PC-9 (cell line): ENCODE measurements at regions of chr3 and their contacts with region 1.

Region 1: DNA sequence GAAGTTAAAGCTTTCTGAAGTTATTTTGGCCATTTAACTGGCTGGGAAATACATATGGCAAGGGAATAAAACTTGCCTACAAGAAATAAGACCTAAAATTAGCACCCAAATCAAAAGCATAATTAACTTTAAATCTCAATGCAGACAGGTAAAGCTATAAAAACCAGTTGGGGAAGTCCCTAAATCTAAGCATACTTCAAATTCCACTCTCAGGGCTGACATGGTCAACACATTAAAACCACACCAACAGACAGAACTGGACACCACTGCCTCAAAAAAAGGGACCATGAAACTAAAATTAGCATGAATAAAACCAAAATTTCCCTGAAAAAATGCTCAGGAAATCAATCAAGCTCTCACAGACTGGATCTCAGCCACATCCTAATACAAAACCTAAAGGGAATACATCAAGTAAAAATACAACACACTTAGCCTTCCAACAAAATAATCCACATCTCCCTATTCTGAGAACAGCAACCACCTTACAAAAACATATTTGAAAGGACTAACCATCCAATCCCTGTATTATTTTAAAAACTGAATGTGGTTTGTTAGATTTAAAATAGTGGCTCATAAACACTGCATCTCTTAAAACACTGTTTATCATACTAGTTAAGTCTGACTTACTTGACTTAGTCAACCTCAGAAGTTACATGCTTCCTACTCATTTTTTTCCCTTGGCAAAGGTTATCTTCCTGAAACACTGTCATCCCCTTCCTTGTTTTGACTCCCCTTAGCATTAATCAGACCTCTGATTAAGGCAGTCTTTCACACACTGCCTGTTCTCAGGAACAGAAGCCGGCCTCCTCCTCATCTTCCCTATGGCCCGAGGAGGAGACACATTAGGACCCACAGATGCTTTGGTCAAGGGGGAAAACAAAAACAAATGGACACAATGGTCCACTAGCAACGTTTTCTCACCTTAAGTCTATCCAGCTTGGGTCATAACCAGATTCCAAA is 8.3 kb downstream of the TRA2B start:
- DNase-seq: peak in 1 of 2 experiments; percentile 74
- H3K4me3 ChIP-seq: peak overlapping the region; percentile 2; the same call in 1 of the 2 replicates
- H3K27ac ChIP-seq: peak overlapping the region; percentile 30
- H3K4me1 ChIP-seq: peaks cover 74% of the 10 kb centered on the region
- H3K27me3 ChIP-seq: no peaks in the 10 kb centered on the region
- CTCF ChIP-seq: no peak

Region 2: DNA sequence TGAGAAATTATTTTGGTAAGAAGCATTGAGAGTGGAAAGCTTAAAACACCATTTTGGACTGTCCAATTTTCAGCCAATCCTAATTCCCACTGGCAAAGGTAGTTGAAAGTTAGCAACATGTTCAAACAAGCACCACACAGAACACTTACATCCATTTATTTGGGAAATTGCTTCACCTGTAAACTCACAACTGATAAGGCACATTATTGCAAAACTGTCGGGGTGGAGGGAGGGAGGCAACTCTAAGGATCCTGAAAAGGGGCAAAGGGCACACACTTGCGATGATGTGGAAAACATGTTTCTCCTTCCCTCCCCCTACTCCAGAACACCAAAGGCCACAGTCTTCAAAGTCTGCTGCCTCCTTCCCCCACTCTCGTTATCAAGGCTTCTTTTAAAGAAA is 440.0 kb before region 1 on chr3:
- CTCF ChIA-PET with region 1: no interaction called
- POLR2A ChIA-PET with region 1: interaction called, 21 read pairs
- intact Hi-C with region 1: no loop called
- DNase-seq: no peak
- H3K4me3 ChIP-seq: no peak overlapping the region
- H3K27ac ChIP-seq: no peak overlapping the region
- H3K4me1 ChIP-seq: no peaks in the 10 kb centered on the region
- H3K27me3 ChIP-seq: no peaks in the 10 kb centered on the region
- CTCF ChIP-seq: no peak

Region 3: GRCh38 chr3:185779461-185779860 is 150.0 kb before region 1 on chr3:
- CTCF ChIA-PET with region 1: interaction called, 16 read pairs
- POLR2A ChIA-PET with region 1: no interaction called
- intact Hi-C with region 1: no loop called
- DNase-seq: no peak
- H3K4me3 ChIP-seq: no peak overlapping the region
- H3K27ac ChIP-seq: no peak overlapping the region
- H3K4me1 ChIP-seq: peaks cover 21% of the 10 kb centered on the region
- H3K27me3 ChIP-seq: no peaks in the 10 kb centered on the region
- CTCF ChIP-seq: no peak

Region 4: DNA sequence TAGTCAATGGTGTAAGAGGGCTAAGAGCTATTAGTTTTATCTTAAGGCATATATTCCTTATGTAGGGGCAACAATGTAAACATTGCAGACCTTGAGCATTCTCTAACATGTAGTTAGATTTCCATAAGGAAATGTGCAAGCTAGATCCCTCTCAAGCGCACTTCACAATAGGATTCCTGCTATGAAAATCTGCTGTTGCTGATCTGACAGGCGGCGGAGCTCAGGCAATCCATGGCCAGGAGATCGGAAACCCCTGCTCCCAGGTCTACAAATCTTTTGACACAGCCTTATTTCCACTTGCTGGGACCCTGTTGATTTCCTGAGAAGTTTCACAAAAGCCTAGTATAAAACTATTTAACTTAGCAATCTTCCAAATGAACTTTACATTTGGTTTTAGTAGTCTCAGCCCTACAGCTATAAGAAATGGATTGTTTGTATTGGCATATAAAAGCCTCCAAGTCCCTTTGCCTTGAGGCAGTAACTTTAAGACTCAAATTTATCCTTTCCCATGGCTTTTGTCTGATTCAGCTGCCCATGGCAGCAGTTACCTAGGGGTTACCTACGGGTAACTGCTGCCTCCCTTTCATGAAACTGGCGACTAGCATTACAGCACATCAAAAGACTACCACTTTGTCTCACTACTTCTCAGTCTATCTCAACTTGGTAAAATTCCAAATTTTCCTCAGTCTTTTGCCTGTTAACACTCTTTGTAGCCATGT is 14.4 kb before region 1 on chr3:
- CTCF ChIA-PET with region 1: no interaction called
- POLR2A ChIA-PET with region 1: no interaction called
- intact Hi-C with region 1: no loop called
- DNase-seq: no peak
- H3K4me3 ChIP-seq: no peak overlapping the region
- H3K27ac ChIP-seq: no peak overlapping the region
- H3K4me1 ChIP-seq: no peaks in the 10 kb centered on the region
- H3K27me3 ChIP-seq: no peaks in the 10 kb centered on the region
- CTCF ChIP-seq: no peak